ENCODE measurements at regions of chr12 and their contacts with region 1.

Region 1: DNA sequence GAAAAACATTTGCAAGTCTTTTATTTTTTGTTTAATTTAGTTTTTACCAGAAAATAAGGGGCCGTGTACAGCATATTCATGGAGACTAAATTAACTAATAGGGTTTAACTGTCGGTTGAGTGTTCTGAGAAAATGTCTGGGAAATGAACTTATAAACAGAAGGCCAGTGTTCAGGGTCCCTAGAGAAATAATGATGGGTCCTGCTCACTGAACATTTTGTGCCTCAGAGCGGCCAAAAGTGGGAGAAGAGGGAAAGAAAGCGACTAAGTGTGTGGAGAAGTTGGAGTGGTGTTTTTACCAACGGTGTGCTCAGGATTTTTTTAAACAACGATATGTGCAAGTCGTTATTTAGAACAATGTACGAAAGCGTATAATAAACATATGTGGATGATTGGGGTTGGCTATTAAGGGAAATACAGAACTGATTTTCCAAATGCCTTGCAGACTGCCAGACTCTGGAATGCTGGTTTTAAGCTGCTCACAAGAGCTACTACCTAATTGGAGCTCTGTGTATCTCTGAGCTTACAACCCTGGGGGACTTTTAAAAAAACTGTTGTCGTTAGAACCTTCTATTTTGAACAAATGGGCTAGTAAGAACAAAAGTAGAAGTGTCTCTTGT is 166.7 kb downstream of the SLC38A4 start:
- DNase-seq: no peak
- ATAC-seq: no peak
- H3K4me3 ChIP-seq: no peak overlapping the region
- H3K27ac ChIP-seq: peak overlapping the region in 1 of 3 donors; percentile 3
- H3K4me1 ChIP-seq: peaks cover 0 to 8% (median 0%) of the 10 kb centered on the region in 4 donors
- H3K27me3 ChIP-seq: no peaks in the 10 kb centered on the region
- CTCF ChIP-seq: no peak
- POLR2A ChIP-seq: no peak

Region 2: DNA sequence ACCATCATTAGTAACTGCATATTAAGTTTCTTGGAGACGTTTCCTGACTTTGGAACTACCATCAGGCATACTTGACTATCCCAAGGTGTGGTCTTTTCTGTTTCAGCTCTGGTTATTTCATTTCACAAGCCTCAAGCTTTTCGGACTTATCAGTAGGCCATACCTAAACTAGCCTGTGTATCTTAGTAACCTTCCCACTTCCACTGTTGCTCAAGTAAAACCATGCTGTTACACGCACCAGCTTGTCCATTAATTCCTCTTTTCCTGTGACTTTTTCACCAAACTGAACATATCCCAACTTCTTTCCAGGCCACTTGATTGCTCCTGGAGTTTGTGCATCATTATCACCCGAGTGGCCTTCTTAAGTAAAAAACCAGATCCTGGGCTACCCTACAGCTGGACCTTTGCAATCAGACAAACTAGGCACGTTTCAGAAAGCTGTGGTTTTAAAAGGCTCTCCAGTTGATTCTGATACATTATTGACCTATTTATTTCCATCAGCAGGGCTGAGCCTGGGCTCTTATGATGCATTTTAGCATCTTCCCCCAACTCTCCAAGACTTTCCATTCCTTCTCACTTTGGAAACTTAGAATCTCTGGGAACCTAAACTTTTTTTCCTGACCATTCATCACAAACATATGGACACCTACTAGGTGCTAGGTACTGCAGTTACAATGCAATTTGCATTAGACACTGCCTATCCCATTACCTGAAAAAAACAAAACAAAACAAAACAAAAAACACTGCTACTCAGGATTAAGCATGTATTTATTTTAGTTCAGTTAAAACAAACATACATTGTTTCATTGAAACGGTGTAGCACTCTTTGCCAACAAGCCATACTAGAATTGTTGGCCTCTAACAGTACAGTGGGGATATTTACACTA is 301.5 kb before region 1 on chr12:
- intact Hi-C with region 1: loop called in 1 of 2 experiments (anchors 10 kb)
- DNase-seq: no peak
- ATAC-seq: peak; percentile 20 to 56 (median 34)
- H3K4me3 ChIP-seq: no peak overlapping the region
- H3K27ac ChIP-seq: peak overlapping the region in 1 of 3 donors; percentile 14
- H3K4me1 ChIP-seq: peaks cover 0 to 25% (median 0%) of the 10 kb centered on the region in 4 donors
- H3K27me3 ChIP-seq: no peaks in the 10 kb centered on the region
- CTCF ChIP-seq: no peak
- POLR2A ChIP-seq: peak; percentile 77

Region 3: DNA sequence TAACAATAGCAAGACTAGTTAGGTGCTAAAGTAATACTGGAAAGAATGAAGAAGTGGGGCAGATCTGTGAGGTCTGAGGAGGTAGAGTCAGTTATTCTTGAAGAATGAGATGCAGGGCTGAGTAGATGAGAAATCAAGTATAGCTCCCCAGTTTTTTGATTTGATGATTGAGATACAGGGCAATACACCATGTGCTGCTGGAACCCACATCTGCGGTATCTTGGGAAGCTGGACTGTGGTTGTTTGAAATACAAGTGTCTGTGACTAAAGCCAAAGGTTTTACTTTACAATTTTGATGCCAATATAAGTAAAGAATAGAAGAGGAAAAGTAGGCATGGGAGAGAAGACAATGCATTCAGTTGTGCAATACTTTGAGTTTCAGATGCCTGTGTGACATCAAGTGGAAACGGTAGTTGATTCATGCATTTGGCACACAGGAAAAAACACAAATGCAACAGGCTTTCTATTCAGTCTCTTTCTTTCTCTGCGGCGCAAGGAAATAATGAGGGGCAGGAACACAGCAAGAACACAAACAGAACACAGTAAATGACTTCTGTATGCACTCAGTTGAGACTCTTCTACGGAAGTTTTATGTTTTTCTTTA is 96.4 kb before region 1 on chr12:
- intact Hi-C with region 1: no loop called
- DNase-seq: no peak
- ATAC-seq: peak; percentile 53 to 84 (median 66)
- H3K4me3 ChIP-seq: no peak overlapping the region
- H3K27ac ChIP-seq: peak overlapping the region in 2 of 3 donors; percentile 16 to 19
- H3K4me1 ChIP-seq: peaks cover 0 to 7% (median 0%) of the 10 kb centered on the region in 4 donors
- H3K27me3 ChIP-seq: no peaks in the 10 kb centered on the region
- CTCF ChIP-seq: no peak
- POLR2A ChIP-seq: no peak

Measured in right lobe of liver (tissue), 6 donors.